Left colon (tissue), 2 donors: ENCODE measurements at regions of chr10 and their contacts with region 1.

Region 1: DNA sequence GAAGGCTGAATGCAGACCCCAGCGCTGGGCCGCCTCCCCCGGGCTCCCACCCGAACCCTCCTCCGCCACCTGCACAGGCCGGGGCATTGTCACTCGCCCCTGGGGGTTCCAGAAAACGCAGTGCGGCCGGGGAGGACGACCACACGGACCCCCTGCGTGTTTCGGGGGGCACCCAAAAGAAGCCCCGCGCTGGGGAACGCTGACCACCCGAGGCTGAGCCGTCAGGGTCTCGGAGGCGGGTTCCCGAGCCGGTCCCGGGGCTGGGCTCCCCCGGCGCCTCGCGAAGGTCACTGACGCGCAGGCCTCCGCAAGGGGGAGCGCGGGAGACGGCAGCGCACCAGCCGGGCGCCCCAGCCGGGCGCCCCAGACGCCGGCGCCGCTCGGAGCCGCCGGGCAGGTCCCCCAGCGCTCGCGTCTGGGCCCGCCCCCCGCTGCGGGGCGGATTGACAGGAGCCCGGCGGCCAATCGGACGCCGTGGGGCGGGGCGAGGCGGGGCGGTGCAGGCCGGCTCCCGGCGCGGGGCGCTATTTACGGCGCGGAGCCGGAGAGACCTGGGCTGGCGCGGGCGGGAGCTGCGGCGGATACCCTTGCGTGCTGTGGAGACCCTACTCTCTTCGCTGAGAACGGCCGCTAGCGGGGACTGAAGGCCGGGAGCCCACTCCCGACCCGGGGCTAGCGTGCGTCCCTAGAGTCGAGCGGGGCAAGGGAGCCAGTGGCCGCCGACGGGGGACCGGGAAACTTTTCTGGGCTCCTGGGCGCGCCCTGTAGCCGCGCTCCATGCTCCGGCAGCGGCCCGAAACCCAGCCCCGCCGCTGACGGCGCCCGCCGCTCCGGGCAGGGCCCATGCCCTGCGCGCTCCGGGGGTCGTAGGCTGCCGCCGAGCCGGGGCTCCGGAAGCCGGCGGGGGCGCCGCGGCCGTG is at the start of gene BAMBI:
- DNase-seq: peak; percentile 82 to 93
- ATAC-seq: peak; percentile 96
- total RNA-seq, gene BAMBI: 0.85 to 12.7 TPM

Region 2: GRCh38 chr10:28302638-28303488 is 374.4 kb before region 1 on chr10 and contains the start of gene MPP7:
- intact Hi-C with region 1: no loop called
- DNase-seq: peak; percentile 94 to 97
- ATAC-seq: peak; percentile 95
- total RNA-seq, gene MPP7: 26.9 to 30.4 TPM

Region 3: DNA sequence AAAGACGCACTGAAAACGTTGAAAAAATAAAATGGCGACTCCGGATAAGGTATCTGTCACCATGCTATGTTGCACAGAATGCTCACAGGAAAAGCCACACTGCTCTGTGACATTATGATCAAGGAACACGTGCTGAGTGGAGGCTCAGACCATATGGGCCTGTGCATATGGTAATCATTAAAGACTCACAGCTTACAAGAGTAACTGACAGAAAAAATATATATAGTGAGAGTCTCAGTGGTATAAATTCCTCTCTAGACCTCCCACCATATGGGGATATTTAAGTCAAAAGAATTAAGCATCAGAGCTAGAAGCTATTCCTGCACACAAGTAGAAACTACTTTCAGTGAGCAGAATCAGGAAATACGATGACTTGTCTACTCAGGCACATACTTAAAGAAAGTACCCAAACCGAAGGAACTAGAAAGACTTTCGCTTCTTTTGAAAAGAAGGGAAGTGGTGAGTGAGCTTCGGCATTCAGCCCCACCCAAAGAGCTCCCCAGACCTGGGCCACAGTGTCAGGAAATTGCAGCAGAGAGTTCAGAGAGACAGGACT is 309.2 kb before region 1 on chr10:
- intact Hi-C with region 1: no loop called
- DNase-seq: no peak
- ATAC-seq: peak; percentile 32

Region 4: DNA sequence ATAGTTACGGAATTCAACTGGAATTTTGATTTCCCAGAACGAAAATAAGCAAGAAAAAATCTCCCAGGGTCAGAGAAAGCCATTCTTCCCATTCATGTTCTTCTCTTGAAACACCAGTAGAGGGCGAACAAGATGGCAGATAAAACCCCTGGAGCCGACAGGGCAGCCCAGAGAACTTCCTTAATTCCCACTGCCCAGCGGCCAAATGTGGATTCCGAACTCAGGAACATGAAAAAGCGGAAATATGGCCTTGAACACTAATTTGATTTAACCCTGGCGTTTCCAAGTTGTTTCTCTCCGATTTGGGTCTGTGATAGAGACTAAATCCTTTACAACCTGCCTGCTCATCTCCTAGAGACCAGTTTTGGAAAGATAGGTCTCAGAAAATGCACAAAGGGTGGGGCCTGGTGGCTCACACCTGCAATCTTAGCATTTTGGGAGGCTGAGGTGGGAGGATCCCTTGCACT is 245.0 kb before region 1 on chr10:
- intact Hi-C with region 1: no loop called
- DNase-seq: peak; percentile 38 to 46
- ATAC-seq: peak; percentile 94

Region 5: DNA sequence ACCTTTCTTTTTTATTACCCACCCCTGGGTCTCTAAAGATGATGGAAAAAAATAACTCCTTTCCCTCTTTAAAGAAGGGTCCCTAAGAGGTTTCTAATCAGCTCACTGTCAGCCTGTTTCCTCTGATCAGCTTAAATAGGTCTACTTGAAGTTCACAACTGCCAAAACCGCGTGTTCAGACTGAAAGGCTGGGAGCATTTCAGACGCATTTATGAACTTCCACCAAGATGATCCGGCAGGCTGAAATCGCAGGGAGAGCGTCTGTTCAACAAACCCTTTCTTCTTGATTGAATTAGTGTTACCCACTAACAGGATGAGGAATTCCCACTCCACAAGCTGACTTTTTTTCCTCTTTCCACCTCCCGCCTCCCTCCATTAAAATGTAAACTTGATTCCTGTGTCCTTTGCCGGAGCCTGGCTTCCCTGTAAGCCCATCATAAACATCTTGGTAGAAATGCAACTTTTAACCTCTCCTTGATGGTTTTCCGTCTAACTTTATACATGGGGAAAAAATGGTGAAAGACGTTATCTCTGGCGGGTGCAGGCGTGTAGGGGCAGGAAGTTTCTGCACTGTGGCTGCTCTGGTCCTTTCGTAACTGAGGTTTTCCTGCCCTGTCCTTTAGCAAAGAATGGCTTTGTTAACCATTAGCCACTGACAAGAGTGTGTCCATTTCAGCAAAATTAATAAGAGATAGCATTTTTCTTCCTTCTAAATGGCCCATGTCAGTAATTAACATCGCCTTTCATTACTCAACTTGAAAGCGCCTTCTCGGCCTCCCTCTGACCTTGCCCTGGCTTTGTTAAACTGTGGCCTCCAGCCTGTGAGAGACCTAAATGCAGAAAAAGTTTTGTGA is 130.8 kb after region 1 on chr10:
- intact Hi-C with region 1: no loop called
- DNase-seq: no peak
- ATAC-seq: no peak

Region 6: GRCh38 chr10:29131952-29132820 is 455.0 kb after region 1 on chr10:
- intact Hi-C with region 1: loop called in 1 of 2 experiments (anchors 10 kb)
- DNase-seq: no peak
- ATAC-seq: no peak